ENCODE measurements at regions of chr13 and their contacts with region 1.

Region 1: GRCh38 chr13:75691183-75691582 is 55.1 kb downstream of the LMO7 start:
- DNase-seq: no peak
- ATAC-seq: no peak
- H3K4me3 ChIP-seq: no peak overlapping the region
- H3K4me3 Mint-ChIP-seq: no peak overlapping the region
- H3K27ac ChIP-seq: no peak overlapping the region
- H3K27ac Mint-ChIP-seq: no peak overlapping the region
- H3K4me1 ChIP-seq: peaks cover 0 to 3% of the 10 kb centered on the region in 2 experiments
- H3K4me1 Mint-ChIP-seq: no peaks in the 10 kb centered on the region
- H3K27me3 ChIP-seq: no peaks in the 10 kb centered on the region
- H3K27me3 Mint-ChIP-seq: no peaks in the 10 kb centered on the region

Region 2: GRCh38 chr13:75675421-75675820 is 15.8 kb before region 1 on chr13:
- CTCF ChIA-PET with region 1: interaction called, 6 to 13 read pairs
- POLR2A ChIA-PET with region 1: no interaction called
- DNase-seq: no peak
- ATAC-seq: no peak
- H3K4me3 ChIP-seq: no peak overlapping the region
- H3K4me3 Mint-ChIP-seq: no peak overlapping the region
- H3K27ac ChIP-seq: no peak overlapping the region
- H3K27ac Mint-ChIP-seq: no peak overlapping the region
- H3K4me1 ChIP-seq: no peaks in the 10 kb centered on the region
- H3K4me1 Mint-ChIP-seq: no peaks in the 10 kb centered on the region
- H3K27me3 ChIP-seq: no peaks in the 10 kb centered on the region
- H3K27me3 Mint-ChIP-seq: no peaks in the 10 kb centered on the region

Region 3: DNA sequence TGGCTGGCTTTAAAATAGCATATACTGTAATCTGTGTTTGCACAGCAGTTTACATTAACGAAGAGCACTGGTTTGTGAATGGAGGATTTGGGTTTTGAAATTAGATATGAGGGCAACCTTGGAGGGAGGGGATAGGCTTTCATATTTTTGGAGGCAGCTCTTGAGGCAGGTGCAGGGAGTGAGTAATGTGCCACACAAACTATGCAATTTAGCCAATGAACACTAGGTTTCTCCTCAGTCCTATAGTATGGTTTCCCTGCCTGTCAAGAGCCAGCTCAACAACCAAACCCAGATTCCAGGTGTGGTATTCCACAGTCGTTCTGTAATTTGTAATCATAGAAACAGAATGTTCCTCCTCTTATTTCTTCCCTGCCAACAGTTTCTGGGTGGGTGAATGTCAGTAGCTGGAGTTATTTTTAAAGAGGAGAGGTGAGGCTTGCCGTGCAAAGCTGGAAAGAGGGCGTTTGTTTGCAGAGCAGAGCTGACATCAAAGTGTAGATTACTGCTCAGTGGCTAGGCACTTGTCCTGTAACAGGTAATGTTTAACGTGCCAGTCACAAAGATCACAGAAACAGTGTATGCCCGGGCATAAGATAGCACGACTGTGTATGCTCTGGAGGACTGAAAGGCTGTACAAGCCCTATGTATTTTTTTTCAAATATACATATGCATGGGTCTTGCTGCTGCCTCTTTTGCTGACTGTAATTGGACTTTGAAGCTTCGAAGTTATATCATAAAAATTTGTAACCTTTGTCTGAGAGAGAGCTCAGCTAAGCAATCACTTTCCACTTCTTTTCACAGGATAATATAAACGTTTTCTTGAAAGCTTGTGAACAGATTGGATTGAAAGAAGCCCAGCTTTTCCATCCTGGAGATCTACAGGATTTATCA is 69.2 kb after region 1 on chr13:
- CTCF ChIA-PET with region 1: interaction called, 12 to 14 read pairs
- POLR2A ChIA-PET with region 1: no interaction called
- DNase-seq: peak in 13 of 35 experiments; percentile 1 to 55 (median 14)
- ATAC-seq: peak; percentile 73 to 81 (median 77)
- H3K4me3 ChIP-seq: peak overlapping the region; percentile 30 to 35
- H3K4me3 Mint-ChIP-seq: peak overlapping the region; percentile 77 to 79 (median 79)
- H3K27ac ChIP-seq: peak overlapping the region; percentile 74
- H3K27ac Mint-ChIP-seq: peak overlapping the region; percentile 84 to 98
- H3K4me1 ChIP-seq: peaks cover 3 to 30% of the 10 kb centered on the region in 2 experiments
- H3K4me1 Mint-ChIP-seq: peaks cover 72% of the 10 kb centered on the region in 3 donors
- H3K27me3 ChIP-seq: no peaks in the 10 kb centered on the region
- H3K27me3 Mint-ChIP-seq: no peaks in the 10 kb centered on the region

Region 4: GRCh38 chr13:75776550-75776949 is 85.4 kb after region 1 on chr13:
- CTCF ChIA-PET with region 1: no interaction called
- POLR2A ChIA-PET with region 1: no interaction called
- DNase-seq: no peak
- ATAC-seq: no peak
- H3K4me3 ChIP-seq: no peak overlapping the region
- H3K4me3 Mint-ChIP-seq: no peak overlapping the region
- H3K27ac ChIP-seq: no peak overlapping the region
- H3K27ac Mint-ChIP-seq: no peak overlapping the region
- H3K4me1 ChIP-seq: no peaks in the 10 kb centered on the region
- H3K4me1 Mint-ChIP-seq: peaks cover 0 to 8% (median 2%) of the 10 kb centered on the region in 3 donors
- H3K27me3 ChIP-seq: no peaks in the 10 kb centered on the region
- H3K27me3 Mint-ChIP-seq: no peaks in the 10 kb centered on the region

Region 5: DNA sequence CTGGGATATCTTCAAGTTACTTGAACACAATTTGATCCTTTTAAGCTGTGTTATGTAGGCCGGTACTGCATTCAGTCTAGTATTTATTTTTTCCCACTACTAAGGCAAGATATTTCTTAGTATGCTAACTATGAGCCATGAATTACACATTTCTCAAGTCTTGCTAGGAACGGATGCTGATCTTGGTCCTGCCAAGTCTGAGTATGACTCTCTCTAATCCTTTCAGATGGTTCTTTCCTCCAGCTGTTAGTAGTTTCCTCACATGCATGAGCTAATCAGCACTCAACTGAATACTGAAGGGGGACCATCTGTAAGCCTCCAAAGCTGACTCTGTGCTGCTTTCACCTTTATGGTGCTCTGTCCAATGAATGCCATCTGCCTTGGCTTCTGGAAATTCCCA is 734.8 kb after region 1 on chr13:
- CTCF ChIA-PET with region 1: no interaction called
- POLR2A ChIA-PET with region 1: interaction called in 1 of 2 experiments, 11 read pairs
- DNase-seq: no peak
- ATAC-seq: no peak
- H3K4me3 ChIP-seq: no peak overlapping the region
- H3K4me3 Mint-ChIP-seq: no peak overlapping the region
- H3K27ac ChIP-seq: no peak overlapping the region
- H3K27ac Mint-ChIP-seq: no peak overlapping the region
- H3K4me1 ChIP-seq: no peaks in the 10 kb centered on the region
- H3K4me1 Mint-ChIP-seq: no peaks in the 10 kb centered on the region
- H3K27me3 ChIP-seq: no peaks in the 10 kb centered on the region
- H3K27me3 Mint-ChIP-seq: peaks cover 0 to 4% of the 10 kb centered on the region in 2 donors